Transverse colon (tissue), 4 donors: ENCODE measurements at regions of chr3 and their contacts with region 1.

Region 1: DNA sequence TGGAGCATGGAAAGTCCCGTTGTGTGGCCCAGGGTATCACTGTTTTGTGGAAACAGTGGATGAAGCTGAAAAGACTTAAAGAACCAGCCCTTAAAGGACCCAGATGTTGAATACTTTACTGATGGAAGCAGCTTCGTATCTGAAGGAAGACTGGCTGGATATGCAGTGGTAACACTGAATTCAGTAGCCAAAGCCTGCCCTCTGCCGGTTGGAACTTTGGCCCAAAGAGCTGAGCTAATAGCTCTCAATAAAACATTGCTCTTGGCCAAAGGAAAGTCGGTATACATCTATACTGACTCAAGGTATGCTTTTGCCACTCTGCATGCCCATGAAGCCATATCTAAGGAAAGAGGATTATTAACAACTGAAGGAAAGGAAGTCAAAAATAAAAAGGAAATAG is 885.4 kb downstream of the PDCD6IP start:
- DNase-seq: peak; percentile 74
- H3K4me3 ChIP-seq: no peak overlapping the region
- H3K27ac ChIP-seq: no peak overlapping the region
- H3K4me1 ChIP-seq: no peaks in the 10 kb centered on the region
- H3K27me3 ChIP-seq: no peaks in the 10 kb centered on the region
- CTCF ChIP-seq: peak; percentile 44 to 67 (median 63)
- EP300 ChIP-seq: no peak
- POLR2A ChIP-seq: no peak

Region 2: DNA sequence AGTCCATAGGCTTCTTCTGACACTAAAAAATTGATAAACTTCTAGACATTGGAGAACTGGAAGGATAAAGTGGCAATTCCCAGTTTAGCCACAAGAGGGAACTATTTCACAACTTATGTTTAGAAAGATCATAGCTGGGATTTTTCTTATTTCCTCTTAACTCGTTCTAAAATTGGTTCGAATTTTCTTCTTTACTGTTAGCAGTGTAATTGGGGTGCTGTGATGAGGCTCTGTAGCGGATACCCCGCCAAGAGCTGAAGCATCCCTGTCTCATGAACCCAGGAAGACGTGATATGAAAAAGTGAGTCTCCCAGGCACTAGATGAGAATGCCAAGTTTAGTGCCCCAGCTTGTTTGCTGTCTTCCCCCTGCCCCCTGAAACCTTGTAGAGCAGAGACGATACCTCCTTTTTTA is 800.3 kb before region 1 on chr3:
- in situ Hi-C with region 1: loop called in 3 of 4 experiments (anchors 10 to 25 kb)
- intact Hi-C with region 1: loop called (anchors 10 kb)
- DNase-seq: no peak
- H3K4me3 ChIP-seq: no peak overlapping the region
- H3K27ac ChIP-seq: no peak overlapping the region
- H3K4me1 ChIP-seq: peaks cover 0 to 4% (median 2%) of the 10 kb centered on the region in 4 donors
- H3K27me3 ChIP-seq: peaks cover 3% of the 10 kb centered on the region
- CTCF ChIP-seq: peak; percentile 70 to 90 (median 83)
- EP300 ChIP-seq: no peak
- POLR2A ChIP-seq: no peak

Region 3: GRCh38 chr3:34106879-34107278 is 577.0 kb before region 1 on chr3:
- in situ Hi-C with region 1: loop called in 3 of 4 experiments (anchors 10 to 25 kb)
- intact Hi-C with region 1: no loop called
- DNase-seq: peak; percentile 25
- H3K4me3 ChIP-seq: no peak overlapping the region
- H3K27ac ChIP-seq: no peak overlapping the region
- H3K4me1 ChIP-seq: no peaks in the 10 kb centered on the region
- H3K27me3 ChIP-seq: no peaks in the 10 kb centered on the region
- CTCF ChIP-seq: peak; percentile 35 to 65 (median 57)
- EP300 ChIP-seq: no peak
- POLR2A ChIP-seq: no peak